ENCODE measurements at regions of chr15 and their contacts with region 1.

Region 1: GRCh38 chr15:71455107-71455506 is 339.8 kb downstream of the THSD4 start:
- DNase-seq: no peak
- H3K4me3 ChIP-seq: no peak overlapping the region
- H3K27ac ChIP-seq: peak overlapping the region in 2 of 5 donors; percentile 4 to 41
- H3K4me1 ChIP-seq: peaks cover 0 to 53% (median 28%) of the 10 kb centered on the region in 4 donors
- H3K27me3 ChIP-seq: no peaks in the 10 kb centered on the region
- CTCF ChIP-seq: no peak
- EP300 ChIP-seq: no peak
- POLR2A ChIP-seq: no peak

Region 2: DNA sequence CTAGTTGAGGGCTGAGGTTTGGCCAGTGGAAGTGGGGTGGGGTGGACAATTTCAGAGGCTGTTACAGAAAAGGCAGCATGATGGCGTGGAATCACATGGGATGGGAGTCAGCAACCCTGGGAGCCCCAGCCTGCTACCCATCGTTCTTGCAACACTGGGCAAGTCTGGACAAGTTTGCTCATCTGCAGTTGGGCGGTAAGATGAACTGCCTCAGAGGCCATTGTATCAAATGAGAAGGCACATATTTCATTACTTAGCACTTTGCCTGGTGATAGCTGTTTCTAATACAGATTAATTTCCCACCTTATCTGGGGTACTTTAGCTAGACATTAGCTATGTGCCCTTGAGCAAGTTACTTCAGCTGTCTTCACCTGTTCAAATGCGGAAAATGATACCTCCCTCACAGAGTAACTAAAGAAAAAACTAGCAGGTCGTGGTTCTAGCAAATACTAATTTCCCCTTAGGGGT is 91.0 kb before region 1 on chr15:
- intact Hi-C with region 1: no loop called
- DNase-seq: no peak
- H3K4me3 ChIP-seq: no peak overlapping the region
- H3K27ac ChIP-seq: no peak overlapping the region
- H3K4me1 ChIP-seq: no peaks in the 10 kb centered on the region
- H3K27me3 ChIP-seq: no peaks in the 10 kb centered on the region
- CTCF ChIP-seq: no peak
- EP300 ChIP-seq: no peak
- POLR2A ChIP-seq: no peak

Region 3: GRCh38 chr15:71386448-71387236 is 68.5 kb before region 1 on chr15:
- intact Hi-C with region 1: no loop called
- DNase-seq: peak in 1 of 2 donors; percentile 52
- H3K4me3 ChIP-seq: no peak overlapping the region
- H3K27ac ChIP-seq: peak overlapping the region in 1 of 5 donors; percentile 61
- H3K4me1 ChIP-seq: peaks cover 17 to 37% (median 28%) of the 10 kb centered on the region in 4 donors
- H3K27me3 ChIP-seq: no peaks in the 10 kb centered on the region
- CTCF ChIP-seq: peak in 4 of 7 experiments; percentile 42 to 62 (median 50)
- EP300 ChIP-seq: no peak
- POLR2A ChIP-seq: no peak

Region 4: DNA sequence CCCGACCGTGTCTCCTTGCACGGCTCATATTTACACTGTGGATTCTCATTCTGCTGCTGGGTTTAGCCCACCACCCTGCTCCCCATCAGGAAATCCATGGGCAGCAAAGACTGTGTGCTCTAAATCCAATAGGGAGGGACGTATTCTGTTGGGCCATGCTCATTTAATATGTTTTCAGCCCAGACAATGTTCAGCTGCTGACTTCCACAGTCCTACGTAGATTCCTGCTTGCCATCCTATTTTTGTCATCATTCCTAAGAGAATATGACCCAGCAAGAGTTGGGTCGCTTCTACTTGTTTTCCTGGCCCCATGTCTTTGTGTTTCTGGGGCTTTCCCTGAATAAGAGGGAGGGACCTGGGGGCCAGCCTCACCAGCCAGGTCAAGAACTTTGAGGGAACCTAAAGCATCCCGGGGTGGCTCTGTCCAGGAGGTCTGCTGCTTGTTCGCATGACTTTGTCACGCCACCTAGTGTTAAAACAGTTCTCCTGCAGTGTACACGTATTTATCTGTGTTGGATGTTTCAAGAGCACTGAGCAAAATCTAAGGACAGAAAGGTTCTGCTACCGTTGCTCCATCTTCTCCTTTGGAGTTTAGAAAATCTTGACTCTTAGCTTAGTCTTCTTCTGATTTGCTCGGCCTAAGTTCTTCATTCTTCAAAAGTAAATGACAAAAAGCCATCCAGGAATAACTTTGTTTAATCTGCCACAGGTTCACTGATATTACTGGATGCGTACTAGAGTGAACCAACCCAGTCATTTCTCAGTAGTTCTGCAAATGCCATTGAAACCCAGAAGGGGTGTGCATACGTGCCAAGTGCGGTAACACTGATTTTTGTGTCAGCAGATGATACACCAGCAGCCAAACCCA is 275.4 kb after region 1 on chr15:
- intact Hi-C with region 1: loop called (anchors 10 kb)
- DNase-seq: peak; percentile 49 to 85
- H3K4me3 ChIP-seq: no peak overlapping the region
- H3K27ac ChIP-seq: peak overlapping the region in 1 of 5 donors; percentile 20
- H3K4me1 ChIP-seq: peaks cover 5 to 21% (median 11%) of the 10 kb centered on the region in 4 donors
- H3K27me3 ChIP-seq: no peaks in the 10 kb centered on the region
- CTCF ChIP-seq: peak in 5 of 7 experiments; percentile 65 to 80 (median 70)
- EP300 ChIP-seq: no peak
- POLR2A ChIP-seq: no peak

Measured in stomach (tissue), 19 donors.